Sigmoid colon (tissue), 7 donors: ENCODE measurements at regions of chr2 and their contacts with region 1.

Region 1: DNA sequence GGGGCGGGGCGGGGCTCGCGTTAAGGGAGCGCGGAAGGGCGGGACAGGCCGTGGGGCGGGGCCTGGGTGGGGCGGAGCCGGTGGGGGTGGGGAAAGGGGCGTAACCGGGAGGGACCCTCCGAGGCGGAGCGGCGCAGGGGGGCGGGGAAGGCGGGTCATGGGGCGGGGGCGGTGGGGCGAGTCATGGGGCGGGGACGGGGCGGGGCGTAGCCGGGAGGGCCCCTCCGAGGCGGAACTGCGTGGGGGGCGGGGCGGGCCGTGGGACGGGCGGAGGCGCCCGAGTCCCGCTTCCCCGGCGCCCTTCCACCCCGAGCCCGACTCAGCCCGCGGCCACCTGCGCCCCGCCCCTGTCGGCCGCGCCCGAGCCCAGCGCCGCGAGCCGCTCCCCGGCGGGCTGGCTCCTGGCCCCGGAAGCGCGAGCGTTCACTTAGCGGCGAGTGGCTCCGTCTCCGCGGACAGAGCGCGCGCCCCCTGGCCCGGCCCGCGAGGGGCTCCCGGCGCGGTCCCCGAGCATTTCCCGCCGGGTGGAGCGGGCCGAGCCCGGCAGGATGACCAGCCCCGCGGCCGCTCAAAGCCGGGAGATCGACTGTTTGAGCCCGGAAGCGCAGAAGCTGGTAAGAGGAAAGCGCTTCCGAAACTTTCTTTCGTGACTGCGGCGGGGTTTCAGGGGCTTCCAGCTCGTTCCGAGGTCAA is 64.7 kb downstream of the LRRFIP1 start:
- DNase-seq: peak; percentile 99
- H3K4me3 ChIP-seq: peak overlapping the region; percentile 78 to 97 (median 88)
- H3K27ac ChIP-seq: peak overlapping the region; percentile 92 to 99 (median 98)
- H3K4me1 ChIP-seq: peaks cover 0 to 83% (median 74%) of the 10 kb centered on the region in 4 donors
- H3K27me3 ChIP-seq: no peaks in the 10 kb centered on the region
- CTCF ChIP-seq: no peak
- EP300 ChIP-seq: no peak
- POLR2A ChIP-seq: peak in 1 of 2 donors; percentile 34

Region 2: DNA sequence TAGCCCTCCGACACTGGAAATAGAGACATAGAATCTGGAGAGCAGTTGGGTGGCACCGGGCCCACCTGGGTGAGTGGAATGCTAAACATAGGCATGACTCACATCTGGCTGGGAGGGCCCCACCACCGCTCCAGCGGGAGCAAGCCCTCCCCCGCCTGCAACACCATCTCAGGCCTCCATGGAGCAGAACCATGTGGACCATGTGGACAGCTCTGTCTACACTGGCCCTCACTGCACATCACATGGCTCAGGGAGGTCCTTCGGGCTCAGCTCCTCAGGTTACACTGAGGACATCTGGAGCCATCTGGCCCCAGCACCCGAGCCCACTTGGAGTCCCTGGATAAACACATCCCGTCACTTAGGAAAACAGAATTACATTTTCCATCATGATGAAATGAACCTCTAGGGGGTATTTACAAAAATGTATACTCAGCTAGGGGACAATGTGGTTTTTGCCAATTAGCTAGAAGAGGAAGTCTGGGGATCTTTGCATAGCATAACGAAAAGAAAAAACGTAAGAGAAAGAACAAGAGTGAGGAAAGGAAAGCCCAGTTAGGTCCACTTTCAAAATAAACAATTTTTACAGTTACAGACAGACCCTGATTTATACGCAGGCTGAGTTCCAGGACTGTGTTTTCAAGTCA is 235.7 kb before region 1 on chr2:
- intact Hi-C with region 1: no loop called
- DNase-seq: peak; percentile 93
- H3K4me3 ChIP-seq: no peak overlapping the region
- H3K27ac ChIP-seq: peak overlapping the region in 2 of 4 donors; percentile 23 to 32
- H3K4me1 ChIP-seq: peaks cover 0 to 20% (median 8%) of the 10 kb centered on the region in 4 donors
- H3K27me3 ChIP-seq: no peaks in the 10 kb centered on the region
- CTCF ChIP-seq: no peak
- EP300 ChIP-seq: no peak
- POLR2A ChIP-seq: no peak

Region 3: GRCh38 chr2:237739101-237739500 is 47.0 kb after region 1 on chr2:
- intact Hi-C with region 1: loop called (anchors 2 kb)
- DNase-seq: peak; percentile 87
- H3K4me3 ChIP-seq: peak overlapping the region in 1 of 4 donors; percentile 8
- H3K27ac ChIP-seq: peak overlapping the region; percentile 79 to 92 (median 84)
- H3K4me1 ChIP-seq: peaks cover 0 to 96% (median 94%) of the 10 kb centered on the region in 4 donors
- H3K27me3 ChIP-seq: no peaks in the 10 kb centered on the region
- CTCF ChIP-seq: no peak
- EP300 ChIP-seq: peak in 2 of 4 donors; percentile 6 to 58
- POLR2A ChIP-seq: peak; percentile 17 to 39

Region 4: GRCh38 chr2:237798236-237799059 is 106.4 kb after region 1 on chr2 and contains the start of gene RBM44:
- intact Hi-C with region 1: no loop called
- DNase-seq: no peak
- H3K4me3 ChIP-seq: no peak within 1 kb of the TSS
- H3K27ac ChIP-seq: no peak within 1 kb of the TSS
- H3K4me1 ChIP-seq: no peaks in the 10 kb centered on the region
- H3K27me3 ChIP-seq: no peaks in the 10 kb centered on the region
- CTCF ChIP-seq: no peak
- EP300 ChIP-seq: no peak
- POLR2A ChIP-seq: no peak
- total RNA-seq, gene RBM44: 0.68 to 1.7 (median 1.2) TPM

Region 5: GRCh38 chr2:237886685-237887481 is 194.8 kb after region 1 on chr2:
- intact Hi-C with region 1: loop called (anchors 10 kb)
- DNase-seq: peak; percentile 100
- H3K4me3 ChIP-seq: peak overlapping the region in 2 of 4 donors; percentile 13 to 23
- H3K27ac ChIP-seq: peak overlapping the region; percentile 91 to 97 (median 96)
- H3K4me1 ChIP-seq: peaks cover 0 to 78% (median 68%) of the 10 kb centered on the region in 4 donors
- H3K27me3 ChIP-seq: no peaks in the 10 kb centered on the region
- CTCF ChIP-seq: no peak
- EP300 ChIP-seq: peak; percentile 99 to 100 (median 100)
- POLR2A ChIP-seq: no peak